HEK293 (cell line): ENCODE measurements at regions of chr4 and their contacts with region 1.

Region 1: GRCh38 chr4:164977243-164978164 is at the start of gene TRIM61:
- H3K4me3 ChIP-seq: no peak within 1 kb of the TSS
- H3K27ac ChIP-seq: no peak within 1 kb of the TSS
- H3K4me1 ChIP-seq: no peaks in the 10 kb centered on the region
- CTCF ChIP-seq: no peak

Region 2: DNA sequence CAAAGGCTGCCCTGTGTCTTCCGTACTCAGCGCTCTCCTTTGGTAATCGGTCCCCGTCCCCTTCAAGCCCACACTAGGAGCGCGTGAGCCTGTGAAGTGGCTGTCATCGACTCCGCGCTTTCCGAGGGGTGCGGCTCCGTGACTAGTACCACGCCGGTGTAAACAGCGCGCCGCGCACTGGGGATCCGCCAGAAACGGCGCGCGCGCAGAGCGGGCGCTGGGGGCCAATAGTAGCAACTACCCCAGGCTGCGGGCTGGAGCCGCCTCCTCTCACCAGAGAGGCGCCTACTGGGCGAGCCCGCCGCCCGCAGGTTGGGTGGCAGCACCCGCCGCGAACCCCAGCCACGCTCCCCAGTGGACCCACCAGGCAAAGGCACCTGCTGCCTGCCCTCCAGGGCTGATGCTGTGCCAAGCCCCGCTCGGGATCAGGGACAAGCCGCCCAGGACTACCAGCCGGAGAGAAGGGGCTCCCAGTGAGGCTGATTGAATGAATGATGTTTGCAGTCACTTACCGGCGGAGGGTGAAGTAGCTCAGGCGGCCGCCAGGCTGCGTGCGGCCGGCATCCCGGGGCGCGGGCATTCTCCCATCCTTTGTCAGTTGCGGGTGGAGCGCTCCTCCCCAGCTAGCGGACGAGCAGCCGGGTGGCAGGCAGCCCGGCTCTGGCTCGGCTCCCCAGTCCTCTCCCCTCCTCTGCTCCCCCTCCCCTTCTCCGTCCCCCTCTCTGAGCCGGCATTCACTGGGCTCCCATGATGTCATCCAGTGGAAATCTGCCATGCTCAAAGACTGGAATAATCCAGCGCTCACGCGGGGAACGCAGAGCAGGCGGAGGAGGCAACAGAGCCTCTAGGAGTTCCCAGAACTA is 593.9 kb before region 1 on chr4:
- CTCF ChIA-PET with region 1: no interaction called
- POLR2A ChIA-PET with region 1: no interaction called
- H3K4me3 ChIP-seq: peak overlapping the region; percentile 52
- H3K27ac ChIP-seq: no peak overlapping the region
- H3K4me1 ChIP-seq: no peaks in the 10 kb centered on the region
- CTCF ChIP-seq: no peak

Region 3: DNA sequence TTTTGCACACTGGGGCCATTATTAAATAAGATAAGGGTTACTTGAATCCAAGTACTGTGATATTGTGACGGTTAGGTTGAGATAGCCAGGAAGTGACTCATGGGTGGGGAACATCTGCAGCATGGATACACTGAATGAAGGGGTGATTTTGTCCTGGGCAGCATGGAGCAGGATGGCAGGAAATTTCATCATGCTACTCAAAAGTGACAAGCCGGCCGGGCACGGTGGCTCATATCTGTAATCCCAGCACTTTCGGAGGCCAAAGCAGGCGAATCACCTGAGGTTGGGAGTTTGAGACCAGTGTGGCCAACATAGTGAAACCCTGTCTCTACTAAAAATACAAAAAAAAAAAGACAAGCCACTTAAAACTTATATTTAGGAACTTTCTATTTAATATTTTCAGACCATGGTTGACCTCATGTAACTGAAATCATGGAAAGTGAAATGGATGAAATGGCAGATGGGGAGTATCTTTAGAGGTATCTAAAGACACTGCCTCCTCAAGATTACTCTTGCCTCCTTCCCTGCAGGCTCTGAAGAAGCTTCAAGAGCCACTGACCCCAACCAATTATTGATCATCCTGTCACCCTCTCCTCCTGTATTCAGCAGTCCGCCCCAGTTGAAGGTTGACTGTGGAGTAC is 50.4 kb after region 1 on chr4:
- CTCF ChIA-PET with region 1: no interaction called
- POLR2A ChIA-PET with region 1: interaction called, 10 read pairs
- H3K4me3 ChIP-seq: no peak overlapping the region
- H3K27ac ChIP-seq: no peak overlapping the region
- H3K4me1 ChIP-seq: no peaks in the 10 kb centered on the region
- CTCF ChIP-seq: no peak

Region 4: GRCh38 chr4:165095311-165095710 is 117.8 kb after region 1 on chr4:
- CTCF ChIA-PET with region 1: no interaction called
- POLR2A ChIA-PET with region 1: no interaction called
- H3K4me3 ChIP-seq: no peak overlapping the region
- H3K27ac ChIP-seq: no peak overlapping the region
- H3K4me1 ChIP-seq: no peaks in the 10 kb centered on the region
- CTCF ChIP-seq: no peak